ENCODE measurements at regions of chr17 and their contacts with region 1.

Region 1: DNA sequence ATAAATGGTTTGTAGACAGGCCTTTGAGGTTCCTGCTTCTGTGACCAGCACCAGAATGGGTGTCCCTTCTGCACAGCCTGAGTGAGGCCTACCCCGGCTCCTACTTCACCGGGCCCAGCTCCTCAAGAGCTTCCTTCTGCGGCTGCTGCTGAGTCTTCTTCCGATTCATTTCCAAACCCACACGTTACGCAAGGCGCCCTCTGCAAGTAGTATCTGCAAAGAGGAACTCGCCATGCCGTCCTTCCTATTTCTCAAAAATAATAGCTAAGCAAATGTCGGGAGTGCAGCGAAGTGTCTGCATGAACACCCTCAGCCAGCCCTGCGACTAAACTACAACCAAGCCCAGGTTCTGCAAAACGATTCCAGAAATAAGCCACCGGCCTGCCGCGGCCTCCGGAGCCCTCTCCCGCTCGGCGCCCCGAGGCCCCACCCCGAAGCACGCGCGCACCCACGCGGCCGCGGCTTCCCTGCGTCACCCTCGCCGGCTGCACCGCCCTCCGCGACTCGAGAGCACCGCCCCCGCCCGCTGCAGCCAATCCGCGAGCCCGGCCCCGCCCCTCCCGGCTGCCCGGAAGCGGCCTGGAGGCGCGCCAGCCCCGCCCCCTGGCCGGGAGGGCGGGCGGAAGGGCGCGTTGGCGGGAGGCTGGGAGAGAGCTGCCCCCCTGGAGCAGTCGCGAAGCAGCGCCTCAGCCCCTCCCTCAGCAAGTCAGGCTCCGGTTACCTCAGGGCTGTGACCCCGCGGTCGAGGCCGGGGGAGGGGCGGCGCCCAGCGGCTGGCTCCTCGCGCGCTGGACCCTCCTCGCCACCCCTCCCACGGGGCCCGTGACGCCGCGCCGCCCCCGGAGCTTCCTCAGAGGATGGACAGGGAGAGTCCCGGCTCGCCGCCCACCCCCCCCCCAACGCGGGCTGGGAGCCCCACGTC is 8.3 kb downstream of the MNT start:
- DNase-seq: peak; percentile 95
- H3K4me3 Mint-ChIP-seq: peak overlapping the region; percentile 77
- H3K27ac Mint-ChIP-seq: peak overlapping the region; percentile 88
- H3K4me1 Mint-ChIP-seq: peaks cover 42% of the 10 kb centered on the region
- H3K27me3 Mint-ChIP-seq: no peaks in the 10 kb centered on the region
- CTCF ChIP-seq: no peak

Region 2: DNA sequence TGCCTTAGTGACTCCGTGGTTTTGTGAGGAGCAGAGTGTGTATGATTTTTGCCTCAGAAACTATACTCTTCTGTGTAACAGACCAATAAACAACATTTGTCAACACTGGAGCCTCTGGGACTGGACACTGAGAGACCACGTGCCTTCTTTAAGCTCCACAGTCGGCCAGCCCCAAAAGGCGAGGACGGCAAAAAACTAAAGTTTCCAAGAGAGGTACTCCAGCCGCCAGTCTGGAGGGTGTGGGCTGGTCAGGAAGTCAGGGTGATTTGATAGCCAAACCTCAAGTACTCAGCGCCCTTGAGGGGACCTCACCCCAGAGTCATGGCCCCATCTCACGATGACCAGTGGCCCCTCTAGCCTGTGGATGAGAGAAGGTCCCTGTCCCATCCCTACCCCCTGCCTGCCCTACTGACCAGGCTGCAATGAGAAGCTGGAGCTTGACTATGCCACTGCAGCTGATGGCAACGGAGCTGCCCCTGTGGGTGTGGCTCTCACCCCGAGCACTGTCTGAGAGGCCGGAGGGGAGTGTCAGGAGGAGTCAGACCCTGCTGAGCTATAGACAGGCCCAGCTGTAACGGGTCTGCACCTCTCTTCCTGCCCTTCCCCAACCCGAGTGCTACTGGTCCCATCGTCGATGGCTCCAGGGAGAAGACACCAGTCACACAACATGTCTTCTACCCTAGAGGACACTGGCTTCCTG is 11.4 kb before region 1 on chr17:
- CTCF ChIA-PET with region 1: interaction called, 10 read pairs
- intact Hi-C with region 1: no loop called
- DNase-seq: no peak
- H3K4me3 Mint-ChIP-seq: no peak overlapping the region
- H3K27ac Mint-ChIP-seq: no peak overlapping the region
- H3K4me1 Mint-ChIP-seq: no peaks in the 10 kb centered on the region
- H3K27me3 Mint-ChIP-seq: no peaks in the 10 kb centered on the region
- CTCF ChIP-seq: no peak

Region 3: DNA sequence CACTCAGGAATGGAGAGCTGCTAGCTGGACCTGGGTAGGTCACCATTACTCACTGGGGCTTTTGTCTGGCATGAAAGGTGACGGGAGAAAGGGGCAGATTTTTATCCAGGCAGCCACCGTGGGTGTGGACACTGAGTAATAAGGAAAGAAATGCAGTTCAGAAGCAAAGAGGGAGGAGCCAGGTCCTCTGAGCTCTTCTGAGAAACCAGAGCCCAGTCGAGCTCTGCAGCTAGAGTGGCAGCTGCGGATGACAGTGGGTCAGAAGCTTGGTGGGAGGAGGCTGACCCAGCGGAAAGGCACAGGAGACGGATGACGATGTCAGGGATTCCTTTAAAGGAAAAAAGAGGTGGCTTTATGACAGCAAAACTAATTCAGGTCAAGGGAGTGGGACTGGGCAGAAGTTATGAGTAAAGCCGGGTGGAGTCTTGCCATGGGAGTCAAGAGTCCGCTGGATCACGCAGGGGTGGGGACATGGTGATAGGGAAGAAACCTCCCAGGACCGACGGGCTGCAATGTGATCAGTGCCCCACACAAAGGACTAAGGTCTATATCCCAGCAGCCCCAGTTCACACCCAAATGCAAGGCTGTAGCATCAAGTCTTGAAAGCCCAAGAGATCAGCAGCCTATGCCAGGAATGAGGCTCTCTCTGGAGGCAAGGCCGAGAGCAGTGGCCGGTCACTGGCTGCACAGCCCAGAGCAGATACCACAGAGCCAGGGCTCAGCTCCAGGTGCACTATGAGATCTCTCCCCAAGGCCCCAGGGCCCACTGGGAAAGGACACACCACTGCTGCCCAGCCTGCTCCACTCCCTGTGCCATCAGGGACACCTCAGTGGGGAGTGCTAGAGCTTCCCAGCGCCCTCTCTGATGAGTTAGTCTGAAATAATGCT is 14.6 kb after region 1 on chr17:
- CTCF ChIA-PET with region 1: interaction called, 13 read pairs
- intact Hi-C with region 1: no loop called
- DNase-seq: peak; percentile 77
- H3K4me3 Mint-ChIP-seq: peak overlapping the region; percentile 60
- H3K27ac Mint-ChIP-seq: peak overlapping the region; percentile 94
- H3K4me1 Mint-ChIP-seq: peaks cover 38% of the 10 kb centered on the region
- H3K27me3 Mint-ChIP-seq: no peaks in the 10 kb centered on the region
- CTCF ChIP-seq: no peak

Region 4: GRCh38 chr17:2416010-2416734 is 23.7 kb after region 1 on chr17:
- CTCF ChIA-PET with region 1: interaction called, 6 read pairs
- intact Hi-C with region 1: loop called (anchors 2 kb)
- DNase-seq: peak; percentile 83
- H3K4me3 Mint-ChIP-seq: no peak overlapping the region
- H3K27ac Mint-ChIP-seq: no peak overlapping the region
- H3K4me1 Mint-ChIP-seq: no peaks in the 10 kb centered on the region
- H3K27me3 Mint-ChIP-seq: no peaks in the 10 kb centered on the region
- CTCF ChIP-seq: peak; percentile 72

Region 5: GRCh38 chr17:2899906-2900305 is 507.4 kb after region 1 on chr17:
- CTCF ChIA-PET with region 1: no interaction called
- intact Hi-C with region 1: no loop called
- DNase-seq: peak; percentile 8
- H3K4me3 Mint-ChIP-seq: no peak overlapping the region
- H3K27ac Mint-ChIP-seq: no peak overlapping the region
- H3K4me1 Mint-ChIP-seq: peaks cover 17% of the 10 kb centered on the region
- H3K27me3 Mint-ChIP-seq: no peaks in the 10 kb centered on the region
- CTCF ChIP-seq: no peak

Measured in Calu3 (cell line).